ENCODE measurements at regions of chr22 and their contacts with region 1.

Region 1: DNA sequence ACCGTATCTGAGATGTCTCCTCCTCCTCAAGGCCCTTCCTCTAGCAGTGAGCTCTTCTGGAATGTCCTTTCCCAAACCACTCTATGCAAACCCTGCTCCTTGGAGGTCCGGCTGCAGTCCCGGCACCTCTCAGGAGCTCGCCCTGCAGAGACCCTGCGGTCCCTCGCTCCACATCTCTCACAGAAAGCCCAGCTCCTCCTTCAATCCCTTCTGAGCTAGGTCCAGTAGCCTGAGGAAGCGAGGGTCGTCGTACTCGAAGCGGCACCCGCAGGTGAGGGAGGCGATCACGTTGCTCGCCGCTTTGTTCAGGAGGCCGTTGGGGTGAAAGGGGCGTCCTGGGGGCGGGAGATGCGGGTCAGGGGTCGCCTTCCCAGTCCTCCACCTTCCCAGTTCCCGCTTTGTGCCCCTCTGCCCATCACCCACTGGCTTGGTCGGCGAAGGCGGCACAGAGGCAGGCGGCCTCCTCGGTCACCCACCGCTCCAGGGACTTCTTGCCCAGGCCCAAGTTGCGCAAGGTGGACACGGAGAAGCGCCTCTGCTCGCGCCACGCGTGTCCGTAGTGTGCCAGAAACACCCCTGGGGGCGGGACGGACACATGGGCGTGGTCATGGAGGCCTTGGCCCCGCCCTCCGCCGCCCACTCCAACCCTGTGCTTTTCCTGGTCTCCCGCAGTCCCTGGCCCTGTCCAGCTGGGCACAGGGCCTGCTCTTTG is 21.5 kb upstream of the CYP2D6 start:
- DNase-seq: no peak
- H3K4me3 ChIP-seq: peak overlapping the region in 1 of 3 experiments; percentile 5
- H3K27ac ChIP-seq: no peak overlapping the region
- H3K4me1 ChIP-seq: no peaks in the 10 kb centered on the region
- H3K27me3 ChIP-seq: no peaks in the 10 kb centered on the region
- CTCF ChIP-seq: no peak
- POLR2A ChIP-seq: no peak

Region 2: DNA sequence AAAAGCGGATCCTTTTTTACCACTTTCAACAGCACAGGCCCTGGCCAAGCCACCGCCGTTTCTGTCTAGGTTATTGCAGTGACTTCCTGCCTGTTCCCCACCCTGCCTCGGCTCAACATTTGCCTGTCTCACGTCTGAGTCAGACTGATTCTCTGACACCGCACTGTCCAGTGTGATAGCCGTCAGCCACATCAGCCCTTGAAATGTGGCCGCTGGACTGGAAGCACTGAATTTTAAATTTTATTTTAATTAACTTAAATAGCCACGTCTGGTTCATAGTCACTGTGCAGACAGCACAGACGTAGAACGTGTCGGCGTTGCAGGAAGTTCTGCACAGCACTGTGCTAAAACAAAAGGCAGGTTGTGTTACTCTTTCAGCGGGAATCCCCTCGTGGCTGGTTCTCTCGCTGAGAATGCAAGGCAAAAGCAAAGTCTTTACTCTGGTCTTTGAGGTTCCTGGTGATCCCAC is 1862.1 kb before region 1 on chr22:
- CTCF ChIA-PET with region 1: no interaction called
- POLR2A ChIA-PET with region 1: no interaction called
- dilution Hi-C with region 1: no loop called
- intact Hi-C with region 1: loop called (anchors 10 kb)
- DNase-seq: no peak
- H3K4me3 ChIP-seq: no peak overlapping the region
- H3K27ac ChIP-seq: no peak overlapping the region
- H3K4me1 ChIP-seq: no peaks in the 10 kb centered on the region
- H3K27me3 ChIP-seq: no peaks in the 10 kb centered on the region
- CTCF ChIP-seq: no peak
- POLR2A ChIP-seq: no peak

Region 3: GRCh38 chr22:42138122-42138770 is 13.8 kb before region 1 on chr22:
- CTCF ChIA-PET with region 1: no interaction called
- POLR2A ChIA-PET with region 1: no interaction called
- dilution Hi-C with region 1: no loop called
- intact Hi-C with region 1: no loop called
- DNase-seq: no peak
- H3K4me3 ChIP-seq: no peak overlapping the region
- H3K27ac ChIP-seq: no peak overlapping the region
- H3K4me1 ChIP-seq: no peaks in the 10 kb centered on the region
- H3K27me3 ChIP-seq: no peaks in the 10 kb centered on the region
- CTCF ChIP-seq: no peak
- POLR2A ChIP-seq: no peak

Measured in endothelial cell of umbilical vein (primary cell).